Naive thymus-derived CD4-positive, alpha-beta T cell (primary cell): ENCODE measurements at regions of chr17 and their contacts with region 1.

Region 1: GRCh38 chr17:74776044-74776977 is at the start of gene NAT9:
- DNase-seq: peak; percentile 95 to 100 (median 98)
- ATAC-seq: peak; percentile 86
- H3K4me3 ChIP-seq: peak within 1 kb of the TSS; percentile 91
- H3K4me3 Mint-ChIP-seq: peak within 1 kb of the TSS; percentile 96 to 100 (median 98)
- H3K27ac ChIP-seq: peak within 1 kb of the TSS; percentile 78
- H3K27ac Mint-ChIP-seq: peak within 1 kb of the TSS; percentile 91 to 99 (median 96)
- H3K4me1 ChIP-seq: peaks cover 49 to 51% of the 10 kb centered on the region in 2 donors
- H3K4me1 Mint-ChIP-seq: peaks cover 32 to 76% (median 66%) of the 10 kb centered on the region in 7 donors
- H3K27me3 ChIP-seq: no peaks in the 10 kb centered on the region
- H3K27me3 Mint-ChIP-seq: no peaks in the 10 kb centered on the region
- total RNA-seq, gene NAT9: 41.4 to 78.8 (median 56.9) TPM

Region 2: DNA sequence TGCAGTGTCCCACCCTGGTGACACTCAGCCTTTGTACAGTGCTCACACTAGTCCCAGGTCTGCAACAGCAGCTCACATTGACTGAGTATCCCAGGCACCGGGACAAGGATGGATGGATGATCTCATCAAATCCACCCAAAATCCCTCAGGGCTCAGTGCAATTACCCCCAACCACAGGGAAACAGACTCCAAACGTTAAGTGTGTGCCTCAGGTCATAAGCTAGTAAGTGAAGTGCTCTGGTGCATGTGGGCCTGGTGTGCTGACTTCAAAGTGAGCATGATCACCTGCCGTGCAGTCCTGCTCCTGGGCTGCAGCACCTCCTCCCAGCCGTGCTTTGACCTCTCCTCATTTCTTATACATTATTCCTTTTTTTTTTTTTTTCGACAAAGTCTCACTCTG is 121.6 kb before region 1 on chr17:
- CTCF ChIA-PET with region 1: interaction called, 74 read pairs
- POLR2A ChIA-PET with region 1: interaction called, 3 read pairs
- intact Hi-C with region 1: no loop called
- DNase-seq: no peak
- ATAC-seq: no peak
- H3K4me3 ChIP-seq: no peak overlapping the region
- H3K4me3 Mint-ChIP-seq: no peak overlapping the region
- H3K27ac ChIP-seq: no peak overlapping the region
- H3K27ac Mint-ChIP-seq: no peak overlapping the region
- H3K4me1 ChIP-seq: peaks cover 0 to 3% of the 10 kb centered on the region in 2 donors
- H3K4me1 Mint-ChIP-seq: peaks cover 5 to 9% (median 6%) of the 10 kb centered on the region in 7 donors
- H3K27me3 ChIP-seq: no peaks in the 10 kb centered on the region
- H3K27me3 Mint-ChIP-seq: peaks cover 9 to 80% (median 22%) of the 10 kb centered on the region in 5 donors

Region 3: DNA sequence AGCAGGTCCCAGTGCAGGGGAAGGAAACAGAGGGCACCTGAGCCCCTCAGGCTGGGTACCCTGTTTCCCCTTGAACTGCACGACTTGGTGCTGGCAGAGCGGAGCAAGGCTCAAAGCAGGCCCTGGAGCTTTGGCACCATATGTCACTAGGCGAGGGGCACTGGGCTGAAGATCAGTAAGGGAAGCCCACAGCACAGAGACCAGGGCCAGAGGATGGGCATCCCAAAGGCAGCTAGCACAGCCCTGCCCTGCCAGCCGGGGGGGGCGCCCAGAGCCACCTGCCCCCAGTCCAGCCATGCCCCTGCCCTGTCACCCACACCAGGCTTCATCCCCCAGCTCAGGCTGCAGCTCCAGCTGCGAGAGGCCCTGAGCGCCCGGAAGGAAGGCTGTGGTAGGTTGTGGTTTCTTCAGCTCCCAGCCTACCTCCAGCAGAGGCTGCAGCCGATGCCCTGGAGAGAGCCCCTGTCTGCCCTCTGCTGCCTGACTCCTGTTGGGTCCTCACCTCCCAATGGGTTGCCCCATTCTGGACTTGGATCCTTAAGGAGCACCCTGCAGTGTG is 17.0 kb before region 1 on chr17:
- CTCF ChIA-PET with region 1: interaction called, 165 read pairs
- POLR2A ChIA-PET with region 1: interaction called, 372 read pairs
- intact Hi-C with region 1: loop called in 1 of 2 experiments (anchors 2 kb)
- DNase-seq: peak in 6 of 9 donors; percentile 47 to 60 (median 56)
- ATAC-seq: peak; percentile 86
- H3K4me3 ChIP-seq: peak overlapping the region; percentile 60
- H3K4me3 Mint-ChIP-seq: peak overlapping the region; percentile 82 to 92 (median 84)
- H3K27ac ChIP-seq: peak overlapping the region; percentile 49
- H3K27ac Mint-ChIP-seq: peak overlapping the region; percentile 75 to 97 (median 90)
- H3K4me1 ChIP-seq: peaks cover 69 to 82% of the 10 kb centered on the region in 2 donors
- H3K4me1 Mint-ChIP-seq: peaks cover 44 to 78% (median 62%) of the 10 kb centered on the region in 7 donors
- H3K27me3 ChIP-seq: no peaks in the 10 kb centered on the region
- H3K27me3 Mint-ChIP-seq: no peaks in the 10 kb centered on the region